Activated CD4-positive, alpha-beta T cell treated with anti-CD3 and anti-CD28 coated beads, Interleukin-2, amount 10 ng/mL, durations not matched to agents 24 days and 14 days (primary cell): ENCODE measurements at regions of chr10 and their contacts with region 1.

Region 1: DNA sequence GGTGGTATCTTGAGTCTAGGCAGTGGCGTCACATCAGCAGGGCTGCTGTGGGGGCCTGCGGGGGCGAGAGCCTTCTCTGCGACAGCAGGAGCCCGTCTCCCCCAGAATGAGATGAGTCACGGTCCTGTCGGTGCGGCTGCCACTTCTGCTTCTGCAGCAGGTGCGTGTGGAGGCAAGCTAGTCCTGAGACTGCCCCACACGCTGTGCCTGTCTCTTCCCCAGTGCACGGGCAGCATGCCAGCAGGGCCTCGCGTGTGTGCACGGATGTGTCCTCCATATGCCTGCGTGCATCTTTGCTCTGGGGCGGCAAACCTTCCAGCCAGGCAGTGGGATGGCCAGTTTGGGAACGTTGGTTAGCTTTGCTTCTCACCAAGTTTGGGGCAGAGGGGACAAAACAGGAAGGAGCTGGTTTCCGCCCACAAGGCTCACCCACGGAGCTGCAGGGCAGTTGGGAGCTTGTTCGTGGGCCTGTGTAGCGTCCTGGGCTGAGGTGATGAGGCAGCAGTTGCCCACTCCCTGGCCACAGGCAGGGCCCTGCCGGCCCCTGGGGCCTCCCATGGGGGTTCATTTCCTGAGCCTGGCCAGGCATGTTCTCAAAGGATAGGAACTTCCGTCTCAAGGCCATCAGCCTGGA is 60.8 kb upstream of the PPIF start:
- DNase-seq: peak; percentile 90
- H3K4me3 Mint-ChIP-seq: peak overlapping the region; percentile 76
- H3K27ac Mint-ChIP-seq: peak overlapping the region; percentile 97
- H3K4me1 Mint-ChIP-seq: peaks cover 55% of the 10 kb centered on the region
- H3K27me3 Mint-ChIP-seq: no peaks in the 10 kb centered on the region

Region 2: DNA sequence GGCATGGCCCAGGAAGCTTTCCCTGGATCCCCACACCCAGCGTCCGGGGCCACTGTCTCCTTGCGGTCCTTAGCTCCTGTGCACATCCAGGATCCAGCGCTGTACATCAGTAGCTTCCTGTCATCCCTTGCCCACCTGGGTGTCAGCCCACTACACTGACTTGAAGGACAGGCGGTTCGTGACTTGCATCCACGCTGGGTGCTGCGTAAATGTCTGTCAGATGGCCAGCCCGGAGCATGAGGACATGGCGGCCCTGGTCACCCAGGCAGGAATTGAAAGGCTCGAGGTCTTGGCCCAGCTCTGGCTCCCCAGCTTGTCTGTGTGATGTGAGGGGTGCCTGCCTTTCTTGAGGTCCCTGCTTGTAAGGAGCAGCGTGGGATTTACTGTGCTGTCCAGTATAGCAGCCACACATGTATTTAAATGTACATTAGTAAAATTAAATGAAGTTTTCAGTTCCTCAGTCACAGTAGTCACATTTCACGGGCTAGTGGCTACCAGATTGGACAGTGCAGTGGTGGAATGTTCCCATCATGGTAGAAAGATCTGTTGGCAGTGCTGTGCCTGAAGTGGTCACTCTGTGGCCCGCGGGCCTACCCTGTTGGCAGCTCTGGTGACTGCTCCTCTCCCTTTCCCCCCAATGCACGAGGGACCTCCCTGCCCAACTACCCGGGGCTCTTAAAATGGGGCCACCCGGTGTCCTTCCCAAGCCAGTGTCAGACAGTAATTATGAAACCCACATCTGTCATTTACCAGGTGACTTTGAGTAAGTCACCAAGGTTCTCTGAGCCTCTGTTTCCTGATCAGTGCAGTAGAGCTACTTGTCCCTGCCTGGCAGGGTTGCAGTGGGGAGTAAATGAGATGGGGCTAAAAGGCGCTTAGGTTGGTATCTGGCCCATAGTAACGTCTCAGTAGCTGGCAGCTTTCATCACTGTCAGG is 37.0 kb before region 1 on chr10:
- intact Hi-C with region 1: loop called (anchors 1 kb)
- DNase-seq: peak; percentile 77
- H3K4me3 Mint-ChIP-seq: peak overlapping the region; percentile 79
- H3K27ac Mint-ChIP-seq: peak overlapping the region; percentile 87
- H3K4me1 Mint-ChIP-seq: peaks cover 73% of the 10 kb centered on the region
- H3K27me3 Mint-ChIP-seq: no peaks in the 10 kb centered on the region

Region 3: DNA sequence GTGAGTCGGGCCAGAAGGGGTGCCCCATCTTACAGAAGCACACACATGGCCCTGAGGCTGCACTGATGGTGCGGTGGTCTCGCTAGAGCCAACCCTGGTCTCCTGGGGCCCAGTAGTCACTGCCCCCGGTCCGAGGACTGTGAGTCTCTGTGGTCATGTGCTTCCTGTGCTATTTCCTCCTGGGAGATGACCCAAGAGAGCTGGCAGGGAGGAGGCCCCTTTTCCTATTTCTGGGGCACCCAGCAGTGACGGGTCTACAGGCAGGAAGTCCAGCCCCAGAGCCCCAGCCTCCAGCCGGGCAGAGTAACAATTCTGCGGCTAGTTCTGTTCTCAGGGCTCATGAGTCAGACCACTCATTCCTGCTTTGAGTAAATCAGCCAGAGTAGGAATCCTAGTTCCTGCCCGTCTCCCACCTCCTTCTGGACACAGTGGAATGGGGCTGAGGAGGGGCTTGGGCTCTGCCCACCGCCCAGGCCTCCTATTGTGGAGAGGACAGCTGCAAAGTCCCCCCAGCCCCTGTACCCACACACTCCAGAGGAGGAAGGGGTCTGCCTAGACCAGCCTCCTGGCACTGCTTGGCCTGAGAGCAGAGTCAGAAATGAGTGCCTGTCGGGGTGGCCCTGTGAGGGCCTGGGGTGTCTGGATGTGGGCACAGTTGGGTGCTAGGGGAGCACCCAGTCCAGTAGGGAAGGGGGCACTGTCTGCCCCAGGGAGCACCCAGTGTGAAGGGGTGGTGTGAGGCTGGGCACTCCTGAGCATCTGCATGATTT is 19.7 kb before region 1 on chr10:
- intact Hi-C with region 1: loop called (anchors 1 kb)
- DNase-seq: no peak
- H3K4me3 Mint-ChIP-seq: no peak overlapping the region
- H3K27ac Mint-ChIP-seq: peak overlapping the region; percentile 63
- H3K4me1 Mint-ChIP-seq: peaks cover 37% of the 10 kb centered on the region
- H3K27me3 Mint-ChIP-seq: no peaks in the 10 kb centered on the region

Region 4: DNA sequence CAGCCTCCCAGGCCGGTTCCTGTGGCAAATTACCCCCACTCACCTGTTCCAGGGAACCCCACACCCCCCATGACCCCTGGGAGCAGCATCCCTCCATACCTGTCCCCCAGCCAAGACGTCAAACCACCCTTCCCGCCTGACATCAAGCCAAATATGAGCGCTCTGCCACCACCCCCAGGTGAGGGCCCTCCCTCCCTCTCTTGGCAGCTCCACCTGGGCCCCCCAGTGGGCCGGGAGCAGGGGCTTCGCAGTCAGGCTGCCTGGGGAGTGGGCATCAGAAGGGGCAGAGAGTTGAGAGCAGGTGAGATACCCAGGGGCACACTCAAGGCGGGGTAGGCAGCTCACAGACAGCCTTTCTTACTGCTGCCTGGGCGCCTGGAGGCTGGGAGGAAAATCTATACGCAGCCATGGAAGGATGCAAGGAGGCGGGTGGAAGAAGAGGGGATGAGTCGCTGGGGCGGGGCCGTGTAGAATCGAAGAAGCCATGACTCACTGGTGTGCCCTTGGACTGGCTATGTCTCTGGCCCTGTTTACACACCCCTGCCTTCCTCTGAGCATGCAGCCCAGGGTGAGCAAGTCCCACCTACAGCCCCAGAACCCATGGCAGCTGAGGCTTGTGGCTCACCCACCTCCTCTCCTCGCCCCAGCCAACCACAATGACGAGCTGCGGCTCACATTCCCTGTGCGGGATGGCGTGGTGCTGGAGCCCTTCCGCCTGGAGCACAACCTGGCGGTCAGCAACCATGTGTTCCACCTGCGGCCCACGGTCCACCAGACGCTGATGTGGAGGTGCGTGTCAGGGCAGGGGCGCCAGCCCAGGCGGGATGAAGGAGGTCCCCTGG is 12.2 kb after region 1 on chr10:
- intact Hi-C with region 1: loop called (anchors 1 kb)
- DNase-seq: peak; percentile 70
- H3K4me3 Mint-ChIP-seq: peak overlapping the region; percentile 8
- H3K27ac Mint-ChIP-seq: peak overlapping the region; percentile 73
- H3K4me1 Mint-ChIP-seq: peaks cover 35% of the 10 kb centered on the region
- H3K27me3 Mint-ChIP-seq: no peaks in the 10 kb centered on the region

Region 5: DNA sequence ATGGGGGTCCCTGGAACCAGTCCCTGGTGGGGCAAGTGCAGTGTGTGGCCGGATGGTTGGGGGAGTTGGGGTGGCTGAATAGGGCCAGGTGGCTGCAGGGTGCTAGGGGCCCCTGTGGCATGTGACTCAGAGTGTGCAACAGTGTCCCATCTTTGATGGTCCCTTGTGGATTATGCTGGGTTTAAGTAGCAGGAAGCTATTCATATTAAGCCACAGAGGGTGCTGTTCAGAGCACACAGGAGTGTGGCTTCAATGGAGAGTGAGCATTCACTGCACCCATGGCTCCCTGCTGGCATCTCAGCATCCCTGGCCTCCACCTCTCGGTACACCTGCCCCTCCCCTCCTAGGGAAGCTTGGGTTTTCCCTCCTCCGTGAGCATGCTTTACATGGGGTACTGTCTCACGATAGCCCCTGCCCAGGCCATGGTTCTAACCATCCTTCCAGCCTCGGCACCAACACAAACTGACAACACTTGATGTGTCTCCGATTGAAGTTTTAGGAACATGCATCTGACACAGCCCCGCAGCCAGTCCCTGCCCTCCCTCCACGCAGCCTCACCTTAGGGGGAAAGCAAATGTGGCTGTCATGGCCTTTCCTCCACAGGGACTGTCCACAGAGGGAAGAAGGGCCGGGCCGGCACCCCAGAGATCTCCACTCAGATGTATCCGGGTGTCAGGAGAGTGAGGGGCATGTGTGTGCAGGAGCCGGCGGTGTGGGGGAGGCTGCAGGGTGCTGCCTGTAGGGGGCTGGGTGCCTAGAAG is 30.4 kb after region 1 on chr10:
- intact Hi-C with region 1: loop called (anchors 1 kb)
- DNase-seq: peak; percentile 75
- H3K4me3 Mint-ChIP-seq: peak overlapping the region; percentile 76
- H3K27ac Mint-ChIP-seq: peak overlapping the region; percentile 90
- H3K4me1 Mint-ChIP-seq: peaks cover 59% of the 10 kb centered on the region
- H3K27me3 Mint-ChIP-seq: peaks cover 3% of the 10 kb centered on the region

Region 6: GRCh38 chr10:79331709-79332108 is 45.3 kb after region 1 on chr10:
- intact Hi-C with region 1: loop called (anchors 2 kb)
- DNase-seq: peak; percentile 95
- H3K4me3 Mint-ChIP-seq: peak overlapping the region; percentile 56
- H3K27ac Mint-ChIP-seq: peak overlapping the region; percentile 95
- H3K4me1 Mint-ChIP-seq: peaks cover 57% of the 10 kb centered on the region
- H3K27me3 Mint-ChIP-seq: no peaks in the 10 kb centered on the region

Region 7: DNA sequence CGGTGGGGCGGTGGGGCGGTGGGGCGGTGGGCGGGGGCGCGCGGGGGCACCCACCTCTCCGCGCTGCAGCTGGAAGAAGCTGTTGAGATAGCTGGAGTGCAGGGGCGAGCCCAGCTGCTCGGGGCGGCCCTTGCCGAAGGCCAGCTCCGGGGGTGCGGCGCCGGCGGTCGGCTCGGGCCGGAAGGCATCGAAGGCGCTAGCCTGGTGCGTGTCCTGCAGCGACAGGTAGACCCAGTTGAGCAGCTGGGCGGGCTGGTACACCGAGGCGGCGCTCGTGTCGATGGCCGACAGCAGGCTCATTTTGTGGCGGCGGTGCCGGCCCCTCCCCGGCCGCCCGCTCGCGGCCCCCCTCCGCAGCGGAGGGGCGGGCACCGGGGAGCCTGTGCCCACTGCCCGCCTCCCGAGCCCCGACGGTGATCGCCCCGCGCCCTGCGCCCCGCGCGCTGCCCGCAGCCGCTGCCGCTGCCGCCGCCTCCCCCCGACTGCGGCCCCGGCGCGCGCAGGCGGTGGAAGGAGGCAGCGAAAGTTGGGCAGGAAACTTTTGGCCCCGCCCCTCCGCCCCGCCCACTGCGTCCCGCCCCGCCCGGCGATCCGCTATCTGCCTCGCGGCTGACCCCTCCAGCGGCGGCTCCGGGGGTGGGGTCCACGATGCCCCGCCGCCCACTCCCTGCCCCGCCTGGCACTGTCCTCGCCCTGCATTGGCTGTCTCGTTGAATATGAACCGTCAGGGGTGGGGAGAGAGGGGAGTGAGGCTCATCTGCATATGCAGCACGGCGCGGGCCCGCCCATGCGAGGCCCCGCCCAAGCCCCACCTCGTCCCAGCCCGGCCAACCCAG is 158.9 kb after region 1 on chr10 and contains the start of gene ZCCHC24:
- intact Hi-C with region 1: loop called (anchors 5 kb)
- DNase-seq: peak; percentile 98
- H3K4me3 Mint-ChIP-seq: peak within 1 kb of the TSS; percentile 86
- H3K27ac Mint-ChIP-seq: peak within 1 kb of the TSS; percentile 66
- H3K4me1 Mint-ChIP-seq: peaks cover 22% of the 10 kb centered on the region
- H3K27me3 Mint-ChIP-seq: peaks cover 44% of the 10 kb centered on the region
- total RNA-seq, gene ZCCHC24: 0.66 and 1.4 TPM in 2 replicates